Natural killer cell (primary cell): ENCODE measurements at regions of chr3 and their contacts with region 1.

Region 1: DNA sequence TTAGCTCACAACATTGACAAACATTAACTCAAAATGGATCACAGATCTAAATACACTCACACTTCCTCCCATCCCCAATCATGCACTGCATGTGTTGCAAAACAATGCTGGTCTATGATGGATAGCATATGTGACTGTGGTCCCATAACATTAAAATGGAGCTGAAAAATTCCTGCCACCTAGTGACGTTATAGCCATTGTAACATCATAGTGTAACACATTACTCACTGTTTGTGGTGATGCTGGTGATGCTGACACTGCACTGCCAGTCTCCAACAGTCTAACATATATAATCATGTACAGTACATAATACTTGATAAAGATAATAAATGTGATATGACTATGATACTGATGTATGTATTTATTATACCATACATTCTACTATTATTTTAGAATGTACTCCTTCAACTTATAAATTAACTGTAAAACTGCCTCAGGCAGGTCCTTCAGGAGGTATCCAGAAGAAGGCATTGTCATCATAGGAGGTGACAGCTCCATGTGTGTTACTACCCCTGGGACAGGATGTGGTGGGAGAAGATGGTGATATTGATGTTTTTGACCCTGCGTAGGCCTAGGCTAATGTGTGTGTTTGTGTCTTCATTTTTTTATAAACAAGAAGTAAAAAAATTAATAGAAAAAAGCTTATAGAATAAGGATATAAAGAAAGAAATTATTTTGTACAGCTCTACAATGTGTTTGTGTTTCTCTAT is 41.3 kb downstream of the TXNRD3 start:
- DNase-seq: peak in 1 of 2 donors; percentile 36
- ATAC-seq: peak; percentile 83 to 87 (median 83)
- H3K4me3 ChIP-seq: no peak overlapping the region
- H3K4me3 Mint-ChIP-seq: peak overlapping the region; percentile 55
- H3K27ac ChIP-seq: no peak overlapping the region
- H3K27ac Mint-ChIP-seq: peak overlapping the region; percentile 61 to 69
- H3K4me1 ChIP-seq: peaks cover 18% of the 10 kb centered on the region
- H3K4me1 Mint-ChIP-seq: peaks cover 39% of the 10 kb centered on the region in 2 donors
- H3K27me3 ChIP-seq: no peaks in the 10 kb centered on the region
- H3K27me3 Mint-ChIP-seq: no peaks in the 10 kb centered on the region
- CTCF ChIP-seq: no peak

Region 2: DNA sequence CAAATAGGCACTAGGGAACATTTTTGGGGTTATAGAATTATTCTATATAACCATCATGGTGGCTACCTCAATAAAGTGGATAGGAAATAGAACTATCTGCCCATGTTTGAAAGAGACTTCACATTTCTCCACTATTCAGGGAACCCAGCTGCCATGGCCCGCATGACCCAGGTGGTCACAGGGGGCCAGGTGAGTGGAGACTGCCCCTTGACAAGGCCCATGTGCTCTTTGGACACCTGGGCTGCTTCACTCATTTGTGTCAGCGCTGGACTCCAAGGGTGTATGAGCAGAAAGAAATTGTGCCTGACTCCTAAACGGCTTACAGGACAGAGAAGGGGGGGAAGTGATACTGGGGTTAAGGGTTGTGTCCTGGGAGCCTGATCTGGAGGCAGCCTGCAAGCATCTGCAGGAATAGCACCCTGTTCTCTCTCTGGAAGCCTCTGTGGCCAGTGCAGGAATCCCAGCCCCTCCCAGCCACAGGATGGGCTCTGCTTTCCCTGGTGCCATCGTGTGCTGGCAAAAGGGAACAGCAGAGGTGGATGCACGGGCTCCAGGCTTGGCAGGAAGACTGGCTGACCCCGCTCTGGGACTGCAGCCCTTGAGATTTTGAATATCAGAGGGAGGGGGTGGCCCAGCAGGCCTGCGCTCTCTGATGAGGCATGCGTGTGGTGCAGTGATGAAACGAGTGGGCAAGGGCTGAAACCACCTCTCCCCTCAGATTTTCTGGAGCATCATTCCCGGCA is 45.8 kb before region 1 on chr3:
- intact Hi-C with region 1: no loop called
- DNase-seq: peak in 1 of 2 donors; percentile 3
- ATAC-seq: no peak
- H3K4me3 ChIP-seq: no peak overlapping the region
- H3K4me3 Mint-ChIP-seq: no peak overlapping the region
- H3K27ac ChIP-seq: no peak overlapping the region
- H3K27ac Mint-ChIP-seq: no peak overlapping the region
- H3K4me1 ChIP-seq: no peaks in the 10 kb centered on the region
- H3K4me1 Mint-ChIP-seq: no peaks in the 10 kb centered on the region
- H3K27me3 ChIP-seq: no peaks in the 10 kb centered on the region
- H3K27me3 Mint-ChIP-seq: peaks cover 13 to 20% of the 10 kb centered on the region in 2 donors
- CTCF ChIP-seq: no peak

Region 3: GRCh38 chr3:126911162-126912026 is 297.8 kb after region 1 on chr3:
- intact Hi-C with region 1: loop called (anchors 2 kb)
- DNase-seq: peak; percentile 75 to 84
- ATAC-seq: peak; percentile 89 to 95 (median 94)
- H3K4me3 ChIP-seq: no peak overlapping the region
- H3K4me3 Mint-ChIP-seq: peak overlapping the region; percentile 88
- H3K27ac ChIP-seq: peak overlapping the region; percentile 34
- H3K27ac Mint-ChIP-seq: peak overlapping the region; percentile 89 to 95
- H3K4me1 ChIP-seq: peaks cover 63% of the 10 kb centered on the region
- H3K4me1 Mint-ChIP-seq: peaks cover 48 to 49% of the 10 kb centered on the region in 2 donors
- H3K27me3 ChIP-seq: peaks cover 39% of the 10 kb centered on the region
- H3K27me3 Mint-ChIP-seq: peaks cover 33 to 40% of the 10 kb centered on the region in 2 donors
- CTCF ChIP-seq: no peak